ENCODE measurements at regions of chr5 and their contacts with region 1.

Region 1: DNA sequence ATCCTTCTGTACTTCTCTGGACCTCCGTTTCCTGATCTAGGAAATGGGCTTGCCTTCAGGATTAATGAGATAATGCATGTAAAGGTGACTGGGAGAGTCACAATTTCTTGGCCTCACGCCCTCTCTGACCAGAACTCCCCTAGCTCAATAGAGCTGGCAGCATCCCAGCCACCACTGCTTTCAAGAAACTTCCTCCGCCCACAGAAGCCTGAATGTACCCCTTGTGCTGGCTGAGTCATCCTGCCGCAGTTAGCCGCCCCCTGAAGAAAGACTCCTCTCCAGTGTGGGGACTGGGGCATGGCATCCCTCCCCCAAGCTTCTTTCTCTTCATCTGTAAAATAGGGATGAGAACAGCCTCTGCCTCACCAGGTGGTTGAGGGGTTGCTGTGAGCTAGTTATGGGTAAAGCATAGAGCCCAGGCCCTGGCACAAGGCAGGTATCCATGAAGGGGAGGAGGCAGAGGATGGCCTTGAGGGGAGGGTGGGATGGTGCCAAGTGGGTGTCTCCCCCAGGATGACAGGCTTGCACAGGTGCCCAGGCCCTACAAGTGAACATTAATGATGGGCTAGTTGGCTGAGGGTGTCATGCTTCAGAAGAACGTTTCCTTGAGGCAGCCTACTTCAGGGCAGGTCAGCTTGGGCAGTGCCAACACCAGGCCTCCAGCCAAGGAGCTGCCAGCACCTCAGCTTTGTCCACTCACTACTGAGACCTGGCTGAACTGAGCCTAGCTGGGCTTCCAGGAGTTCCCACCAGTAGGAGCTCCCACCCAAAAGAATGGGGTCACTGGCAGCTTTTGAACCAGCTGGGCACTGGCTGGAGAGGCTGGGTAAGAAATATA is 3.4 kb downstream of the PDLIM4 start:
- DNase-seq: peak; percentile 95
- H3K4me3 ChIP-seq: peak overlapping the region in 1 of 3 experiments; percentile 81
- H3K27ac ChIP-seq: peak overlapping the region; percentile 92
- H3K4me1 ChIP-seq: peaks cover 79% of the 10 kb centered on the region
- H3K27me3 ChIP-seq: no peaks in the 10 kb centered on the region
- CTCF ChIP-seq: no peak

Region 2: GRCh38 chr5:132190161-132190817 is 70.6 kb before region 1 on chr5:
- CTCF ChIA-PET with region 1: no interaction called
- dilution Hi-C with region 1: no loop called
- in situ Hi-C with region 1: no loop called
- intact Hi-C with region 1: loop called (anchors 2 kb)
- DNase-seq: peak; percentile 55
- H3K4me3 ChIP-seq: no peak overlapping the region
- H3K27ac ChIP-seq: no peak overlapping the region
- H3K4me1 ChIP-seq: no peaks in the 10 kb centered on the region
- H3K27me3 ChIP-seq: no peaks in the 10 kb centered on the region
- CTCF ChIP-seq: peak; percentile 72 to 85

Region 3: DNA sequence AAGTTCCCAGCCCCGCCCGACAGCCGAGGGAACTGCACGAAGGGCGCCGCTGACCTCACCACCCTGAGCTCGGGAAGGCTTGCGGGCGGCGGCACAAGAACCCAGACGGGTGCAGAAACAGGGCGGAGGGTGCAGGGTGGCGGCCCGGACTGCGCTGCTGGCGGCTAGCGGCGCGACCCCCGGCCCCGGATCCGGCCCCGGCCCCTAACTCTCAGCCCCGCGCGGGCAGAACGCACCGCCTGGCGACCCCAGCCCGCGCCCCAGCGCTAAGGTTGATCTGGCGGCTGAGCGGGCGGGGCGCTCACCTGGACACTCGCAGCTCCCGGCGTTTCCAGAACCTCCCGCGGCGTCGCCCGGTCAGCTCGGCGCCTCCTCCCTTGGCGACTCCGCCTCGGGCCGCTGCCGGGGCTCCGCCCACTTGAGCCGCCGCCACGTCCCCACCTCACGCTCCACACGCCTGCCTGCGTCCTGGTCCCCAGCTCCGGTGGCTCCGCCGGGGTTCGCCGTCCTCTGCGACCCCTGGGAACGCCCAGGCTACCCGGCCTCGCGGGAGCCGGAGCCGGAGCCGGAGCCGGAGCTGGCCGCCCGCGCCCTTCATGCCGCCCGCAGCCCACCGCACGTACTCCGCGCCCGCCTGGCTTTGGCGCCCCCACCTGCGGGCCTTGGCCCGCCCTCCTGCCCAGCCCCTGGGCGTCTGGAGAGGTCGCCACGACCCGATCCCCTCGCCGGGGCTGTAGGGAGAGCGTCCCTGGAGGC is 33.3 kb before region 1 on chr5 and contains the start of gene P4HA2:
- CTCF ChIA-PET with region 1: no interaction called
- dilution Hi-C with region 1: loop called (anchors 5 kb)
- in situ Hi-C with region 1: no loop called
- intact Hi-C with region 1: loop called (anchors 5 kb)
- DNase-seq: peak; percentile 77
- H3K4me3 ChIP-seq: peak within 1 kb of the TSS; percentile 51 to 72 (median 67)
- H3K27ac ChIP-seq: peak within 1 kb of the TSS; percentile 65
- H3K4me1 ChIP-seq: peaks cover 42% of the 10 kb centered on the region
- H3K27me3 ChIP-seq: no peaks in the 10 kb centered on the region
- CTCF ChIP-seq: peak in 1 of 2 donors; percentile 22
- total RNA-seq, gene P4HA2: 103 to 142 TPM

Region 4: DNA sequence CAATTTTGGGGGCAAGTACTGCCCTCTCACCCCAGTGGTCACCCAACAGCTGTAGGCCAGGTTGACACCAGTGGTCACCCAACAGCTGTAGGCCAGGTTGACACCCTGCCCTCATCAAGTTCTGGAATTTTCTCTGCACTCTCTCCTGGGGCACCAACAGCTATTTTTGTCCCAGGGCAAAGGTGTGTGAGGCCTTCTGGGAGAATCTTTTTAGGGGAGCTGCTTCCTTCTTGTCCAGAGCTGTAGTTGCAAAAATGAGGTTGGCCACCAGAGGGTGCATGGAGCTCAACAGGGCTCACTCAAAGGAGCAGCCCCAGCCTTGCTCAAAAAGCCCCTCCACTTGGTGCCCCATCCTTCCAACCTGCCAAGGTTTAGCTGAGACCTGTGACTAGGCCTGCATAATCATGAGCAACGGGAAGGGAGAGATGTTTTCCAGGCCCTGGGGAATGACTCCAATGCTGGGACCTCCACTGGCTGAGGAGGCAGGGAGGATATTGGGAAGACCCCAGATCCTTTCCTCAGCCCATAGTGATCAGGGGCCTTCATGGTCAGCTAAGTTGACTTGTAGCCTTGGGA is 22.7 kb before region 1 on chr5:
- CTCF ChIA-PET with region 1: interaction called, 10 read pairs
- dilution Hi-C with region 1: no loop called
- in situ Hi-C with region 1: no loop called
- intact Hi-C with region 1: loop called (anchors 2 kb)
- DNase-seq: peak; percentile 50
- H3K4me3 ChIP-seq: no peak overlapping the region
- H3K27ac ChIP-seq: no peak overlapping the region
- H3K4me1 ChIP-seq: peaks cover 12% of the 10 kb centered on the region
- H3K27me3 ChIP-seq: no peaks in the 10 kb centered on the region
- CTCF ChIP-seq: peak; percentile 76 to 89

Region 5: GRCh38 chr5:132293066-132293991 is 32.4 kb after region 1 on chr5:
- CTCF ChIA-PET with region 1: no interaction called
- dilution Hi-C with region 1: no loop called
- in situ Hi-C with region 1: no loop called
- intact Hi-C with region 1: loop called (anchors 2 kb)
- DNase-seq: peak; percentile 81
- H3K4me3 ChIP-seq: peak overlapping the region; percentile 55 to 66 (median 60)
- H3K27ac ChIP-seq: peak overlapping the region; percentile 84
- H3K4me1 ChIP-seq: peaks cover 27% of the 10 kb centered on the region
- H3K27me3 ChIP-seq: no peaks in the 10 kb centered on the region
- CTCF ChIP-seq: peak in 1 of 2 donors; percentile 24

Region 6: GRCh38 chr5:132363431-132364112 is 102.6 kb after region 1 on chr5:
- CTCF ChIA-PET with region 1: no interaction called
- dilution Hi-C with region 1: loop called (anchors 5 kb)
- in situ Hi-C with region 1: no loop called
- intact Hi-C with region 1: loop called (anchors 1 kb)
- DNase-seq: peak; percentile 95
- H3K4me3 ChIP-seq: no peak overlapping the region
- H3K27ac ChIP-seq: peak overlapping the region; percentile 92
- H3K4me1 ChIP-seq: peaks cover 48% of the 10 kb centered on the region
- H3K27me3 ChIP-seq: no peaks in the 10 kb centered on the region
- CTCF ChIP-seq: no peak

Region 7: GRCh38 chr5:132369474-132370180 is 108.7 kb after region 1 on chr5 and contains the start of gene SLC22A5:
- CTCF ChIA-PET with region 1: no interaction called
- dilution Hi-C with region 1: loop called (anchors 5 kb)
- in situ Hi-C with region 1: no loop called
- intact Hi-C with region 1: loop called (anchors 1 kb)
- DNase-seq: peak; percentile 78
- H3K4me3 ChIP-seq: peak within 1 kb of the TSS; percentile 68 to 91 (median 85)
- H3K27ac ChIP-seq: peak within 1 kb of the TSS; percentile 94
- H3K4me1 ChIP-seq: peaks cover 38% of the 10 kb centered on the region
- H3K27me3 ChIP-seq: no peaks in the 10 kb centered on the region
- CTCF ChIP-seq: no peak
- total RNA-seq, gene SLC22A5: 11.5 to 13.8 TPM

Measured in mammary epithelial cell (primary cell).